SK-N-SH (cell line): ENCODE measurements at regions of chr22 and their contacts with region 1.

Region 1: GRCh38 chr22:30289134-30289979 is at the start of gene CASTOR1:
- DNase-seq: peak; percentile 99
- H3K4me3 ChIP-seq: peak within 1 kb of the TSS; percentile 83 to 84
- H3K27ac ChIP-seq: peak within 1 kb of the TSS; percentile 53 to 74
- H3K4me1 ChIP-seq: peaks cover 16 to 30% of the 10 kb centered on the region in 2 experiments; a peak in 2 of 4 replicates
- H3K27me3 ChIP-seq: no peaks in the 10 kb centered on the region
- CTCF ChIP-seq: no peak
- EP300 ChIP-seq: no peak
- RAD21 ChIP-seq: no peak
- polyA plus RNA-seq, gene CASTOR1: 14.4 and 17.4 TPM in 2 replicates

Region 2: DNA sequence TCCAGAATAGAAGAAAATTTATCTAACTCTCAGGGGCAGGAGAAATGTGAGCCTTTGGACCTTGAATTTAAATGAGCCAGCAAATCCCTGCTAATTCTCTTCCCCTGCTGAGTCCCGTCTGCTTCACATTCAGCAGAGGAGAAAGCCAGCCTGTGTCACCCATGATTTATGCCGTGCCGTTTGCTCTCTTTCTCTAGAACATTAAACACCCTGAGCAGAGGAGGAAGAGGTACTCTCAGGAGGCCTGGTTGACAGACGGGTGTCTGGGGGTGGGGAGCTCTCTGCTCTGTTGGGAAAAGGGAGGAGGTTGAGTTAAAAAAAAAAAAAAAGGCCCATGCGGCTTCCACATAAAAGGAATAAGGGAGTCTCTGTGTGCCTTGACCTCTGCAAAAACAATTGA is 417.7 kb before region 1 on chr22:
- CTCF ChIA-PET with region 1: no interaction called
- POLR2A ChIA-PET with region 1: no interaction called
- DNase-seq: no peak
- H3K4me3 ChIP-seq: no peak overlapping the region
- H3K27ac ChIP-seq: no peak overlapping the region
- H3K4me1 ChIP-seq: peaks cover 0 to 3% of the 10 kb centered on the region in 2 experiments; a peak in 1 of 4 replicates
- H3K27me3 ChIP-seq: no peaks in the 10 kb centered on the region
- CTCF ChIP-seq: no peak
- EP300 ChIP-seq: no peak
- RAD21 ChIP-seq: no peak

Region 3: GRCh38 chr22:30104501-30105156 is 184.7 kb before region 1 on chr22:
- CTCF ChIA-PET with region 1: interaction called, 82 read pairs
- POLR2A ChIA-PET with region 1: no interaction called
- DNase-seq: no peak
- H3K4me3 ChIP-seq: no peak overlapping the region
- H3K27ac ChIP-seq: peak overlapping the region in 1 of 2 experiments; percentile 27; a peak in 1 of 4 replicates
- H3K4me1 ChIP-seq: peaks cover 0 to 11% of the 10 kb centered on the region in 2 experiments; a peak in 1 of 4 replicates
- H3K27me3 ChIP-seq: no peaks in the 10 kb centered on the region
- CTCF ChIP-seq: no peak
- EP300 ChIP-seq: no peak
- RAD21 ChIP-seq: no peak

Region 4: DNA sequence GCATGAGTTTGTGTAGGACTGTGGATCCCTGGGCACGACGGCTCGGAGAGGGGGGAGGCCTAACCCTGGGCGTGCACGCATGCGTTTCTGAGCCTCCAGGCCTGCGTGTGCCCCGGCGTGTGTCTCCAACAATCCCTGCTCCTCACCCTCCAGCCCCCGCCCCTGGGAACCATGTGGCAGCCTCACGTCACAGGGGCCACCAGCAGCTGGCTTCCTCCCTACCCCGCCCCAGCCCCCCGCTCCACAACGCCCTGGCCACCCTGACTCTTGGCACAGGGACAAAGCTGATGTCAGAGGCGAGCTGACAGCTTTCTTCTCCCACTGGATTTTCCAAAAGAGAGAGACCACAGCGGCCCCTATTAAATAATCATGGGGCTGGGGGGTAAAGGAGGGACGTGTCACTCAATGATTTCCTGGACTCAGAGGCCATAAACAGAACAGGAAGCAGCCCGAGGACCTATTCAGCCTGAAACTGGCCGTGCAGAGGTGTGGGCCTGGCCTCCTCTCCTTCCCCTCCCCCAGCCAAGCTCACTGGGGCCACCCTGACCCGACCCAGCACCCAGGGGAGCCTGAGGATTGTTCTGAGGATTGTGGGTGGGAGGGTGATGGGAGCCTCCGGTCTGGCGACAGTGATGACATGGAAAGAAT is 36.0 kb before region 1 on chr22:
- CTCF ChIA-PET with region 1: interaction called, 15 read pairs
- POLR2A ChIA-PET with region 1: no interaction called
- DNase-seq: peak; percentile 84
- H3K4me3 ChIP-seq: no peak overlapping the region
- H3K27ac ChIP-seq: peak overlapping the region in 1 of 2 experiments; percentile 63; a peak in 2 of 4 replicates
- H3K4me1 ChIP-seq: peaks cover 29 to 40% of the 10 kb centered on the region in 2 experiments
- H3K27me3 ChIP-seq: no peaks in the 10 kb centered on the region
- CTCF ChIP-seq: no peak
- EP300 ChIP-seq: no peak
- RAD21 ChIP-seq: no peak

Region 5: GRCh38 chr22:30310881-30311771 is 21.8 kb after region 1 on chr22:
- CTCF ChIA-PET with region 1: interaction called, 31 read pairs
- POLR2A ChIA-PET with region 1: interaction called, 3 read pairs
- DNase-seq: no peak
- H3K4me3 ChIP-seq: no peak overlapping the region
- H3K27ac ChIP-seq: peak overlapping the region in 1 of 2 experiments; percentile 66; a peak in 3 of 4 replicates
- H3K4me1 ChIP-seq: peaks cover 26 to 35% of the 10 kb centered on the region in 2 experiments; a peak in 3 of 4 replicates
- H3K27me3 ChIP-seq: no peaks in the 10 kb centered on the region
- CTCF ChIP-seq: no peak
- EP300 ChIP-seq: no peak
- RAD21 ChIP-seq: no peak

Region 6: GRCh38 chr22:30336752-30337460 is 47.5 kb after region 1 on chr22:
- CTCF ChIA-PET with region 1: interaction called, 15 read pairs
- POLR2A ChIA-PET with region 1: no interaction called
- DNase-seq: no peak
- H3K4me3 ChIP-seq: no peak overlapping the region
- H3K27ac ChIP-seq: no peak overlapping the region
- H3K4me1 ChIP-seq: no peaks in the 10 kb centered on the region
- H3K27me3 ChIP-seq: no peaks in the 10 kb centered on the region
- CTCF ChIP-seq: no peak
- EP300 ChIP-seq: no peak
- RAD21 ChIP-seq: no peak

Region 7: DNA sequence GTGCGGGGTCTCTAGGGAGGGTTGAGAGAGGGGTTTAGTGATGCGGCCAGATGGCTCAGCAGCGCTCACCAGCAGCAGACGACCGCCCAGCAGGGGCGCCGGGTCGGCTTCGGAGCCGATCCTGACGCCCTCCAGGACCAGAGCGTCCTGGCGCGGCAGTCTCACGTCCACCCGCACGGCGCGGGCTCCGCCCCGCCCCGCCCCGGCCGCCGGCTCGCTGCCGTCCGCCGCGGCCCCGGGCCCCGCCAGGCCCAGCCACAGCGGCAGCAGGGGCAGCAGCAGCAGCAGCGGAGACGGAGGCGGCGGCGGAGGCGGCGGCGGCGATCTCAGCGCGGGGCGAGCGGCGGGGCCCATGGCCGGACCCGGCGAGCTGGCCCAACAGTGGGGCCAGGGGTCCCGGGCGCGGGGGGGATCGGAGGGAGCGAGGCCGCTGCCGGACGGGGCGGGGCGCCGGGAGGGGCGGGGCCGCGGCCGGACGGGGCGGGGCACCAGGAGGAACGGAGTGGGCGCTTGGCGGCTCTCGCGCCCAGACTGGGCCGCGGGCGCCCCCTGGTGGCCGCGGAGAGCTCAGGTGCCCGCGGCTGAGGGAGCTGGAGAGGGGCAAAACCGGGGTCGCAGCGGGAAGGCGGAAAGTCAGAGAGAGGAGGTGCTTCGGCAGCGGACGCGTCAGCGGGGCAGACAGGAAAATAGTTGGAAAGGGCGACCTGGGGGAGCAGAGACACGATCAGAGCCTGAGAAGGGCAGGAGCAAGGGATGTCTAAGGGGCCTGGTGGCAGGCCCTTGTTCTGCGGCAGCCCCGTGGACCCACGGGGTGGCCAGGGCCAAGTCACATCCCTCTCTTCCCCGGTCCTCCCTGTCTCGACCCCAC is 97.8 kb after region 1 on chr22 and contains the start of gene RNF215:
- CTCF ChIA-PET with region 1: interaction called, 228 read pairs
- POLR2A ChIA-PET with region 1: interaction called, 10 read pairs
- DNase-seq: peak; percentile 99
- H3K4me3 ChIP-seq: peak within 1 kb of the TSS; percentile 61 to 82
- H3K27ac ChIP-seq: peak within 1 kb of the TSS in 1 of 2 experiments; percentile 76; a peak in 2 of 4 replicates
- H3K4me1 ChIP-seq: peaks cover 4 to 12% of the 10 kb centered on the region in 2 experiments; a peak in 3 of 4 replicates
- H3K27me3 ChIP-seq: no peaks in the 10 kb centered on the region
- CTCF ChIP-seq: peak; percentile 85
- EP300 ChIP-seq: no peak
- RAD21 ChIP-seq: peak; percentile 80
- polyA plus RNA-seq, gene RNF215: 28.6 and 37.2 TPM in 2 replicates